ENCODE measurements at regions of chr1 and their contacts with region 1.

Region 1: DNA sequence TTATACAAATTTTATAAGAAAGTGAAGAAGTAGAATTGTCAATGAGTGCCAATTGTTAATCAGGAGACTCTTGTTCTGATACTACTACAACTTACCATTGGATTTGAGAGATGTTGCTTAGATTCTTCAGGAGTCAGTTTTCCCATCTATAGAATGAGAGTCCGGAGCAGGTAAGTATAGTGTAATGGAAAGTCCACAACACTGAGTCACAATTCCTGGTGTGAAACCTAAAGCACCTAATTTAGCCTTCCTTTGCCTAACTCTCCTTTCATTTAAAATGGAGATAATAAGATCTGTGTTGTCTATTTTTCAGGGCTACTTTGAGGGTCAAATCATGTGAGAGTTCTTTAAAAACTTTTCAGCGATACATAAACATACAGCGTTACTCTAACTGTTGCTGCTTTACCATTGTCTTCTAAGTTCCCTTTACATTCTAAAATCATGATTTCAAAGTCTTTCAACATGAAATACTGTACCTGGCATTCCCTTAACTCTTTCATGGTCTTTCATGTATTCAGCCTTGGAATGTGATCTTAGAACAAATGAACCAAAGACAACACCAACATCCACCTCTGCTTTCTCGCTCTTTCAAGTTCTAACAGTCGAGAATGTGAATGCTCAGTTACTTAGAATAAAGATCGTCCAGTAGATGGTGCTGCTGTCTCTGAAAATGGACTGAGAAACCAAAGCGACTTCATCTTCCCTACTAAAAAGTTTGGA is 90.9 kb downstream of the SLC30A10 start:
- DNase-seq: peak; percentile 55
- H3K4me3 Mint-ChIP-seq: peak overlapping the region; percentile 10
- H3K27ac Mint-ChIP-seq: no peak overlapping the region
- H3K4me1 Mint-ChIP-seq: peaks cover 20% of the 10 kb centered on the region
- H3K27me3 Mint-ChIP-seq: peaks cover 45% of the 10 kb centered on the region
- CTCF ChIP-seq: peak; percentile 57

Region 2: DNA sequence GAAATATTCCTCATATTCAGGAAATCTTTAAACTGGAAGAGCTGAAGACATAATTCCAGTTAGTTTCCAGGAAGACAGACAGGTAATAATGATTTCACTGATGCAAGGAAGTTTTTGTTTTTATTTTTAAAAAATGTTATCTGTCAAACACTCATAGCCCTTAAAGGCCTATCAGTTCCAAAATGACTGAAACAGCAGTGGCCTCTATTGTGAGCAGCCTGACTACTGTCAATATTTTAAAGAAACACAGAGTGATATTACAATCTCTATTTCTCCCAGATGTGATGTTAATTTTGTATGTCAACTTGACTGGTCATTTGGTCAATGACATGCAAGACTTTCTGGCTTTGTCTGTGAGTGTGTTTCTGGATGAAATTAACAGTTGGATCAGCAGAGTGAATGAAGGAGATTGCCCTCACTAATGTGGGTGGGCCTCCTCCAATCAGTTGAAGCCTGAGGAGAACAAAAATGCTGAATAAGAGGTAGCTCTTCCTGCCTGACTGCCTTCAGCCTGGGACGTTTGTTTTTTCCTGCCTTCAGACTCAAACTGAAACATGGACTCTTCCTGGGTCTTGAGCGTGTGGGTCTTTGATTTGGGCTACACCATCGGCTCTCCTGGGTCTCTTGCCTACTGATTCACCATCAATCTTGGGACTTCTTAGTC is 122.2 kb after region 1 on chr1:
- CTCF ChIA-PET with region 1: no interaction called
- intact Hi-C with region 1: loop called (anchors 5 kb)
- DNase-seq: no peak
- H3K4me3 Mint-ChIP-seq: no peak overlapping the region
- H3K27ac Mint-ChIP-seq: no peak overlapping the region
- H3K4me1 Mint-ChIP-seq: peaks cover 9% of the 10 kb centered on the region
- H3K27me3 Mint-ChIP-seq: no peaks in the 10 kb centered on the region
- CTCF ChIP-seq: no peak

Region 3: DNA sequence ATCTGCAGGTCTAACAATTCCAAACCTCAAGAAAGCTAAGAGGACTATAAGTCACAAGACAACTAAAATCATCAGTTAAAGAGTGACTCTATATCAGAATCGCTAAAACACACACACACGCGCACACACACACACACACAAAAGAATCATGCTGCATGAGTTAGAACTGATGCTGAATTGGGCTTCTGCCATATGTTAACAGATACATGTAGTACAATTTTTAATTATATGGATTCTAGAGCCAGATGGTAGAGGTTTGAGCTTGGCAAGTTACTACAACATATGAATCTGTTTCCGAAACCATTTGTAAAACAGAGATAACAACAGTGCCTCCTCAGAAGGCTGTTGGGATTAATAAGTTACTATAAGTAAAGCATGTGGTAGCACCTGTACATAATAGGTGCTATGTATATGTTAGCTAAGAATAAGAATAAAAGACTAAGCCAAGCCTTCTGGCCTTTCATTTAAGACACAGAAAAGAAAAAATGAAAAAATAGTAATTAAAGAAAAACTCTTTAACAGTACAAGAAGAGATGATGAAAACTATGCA is 191.0 kb after region 1 on chr1:
- CTCF ChIA-PET with region 1: no interaction called
- intact Hi-C with region 1: no loop called
- DNase-seq: no peak
- H3K4me3 Mint-ChIP-seq: no peak overlapping the region
- H3K27ac Mint-ChIP-seq: no peak overlapping the region
- H3K4me1 Mint-ChIP-seq: no peaks in the 10 kb centered on the region
- H3K27me3 Mint-ChIP-seq: no peaks in the 10 kb centered on the region
- CTCF ChIP-seq: no peak

Region 4: DNA sequence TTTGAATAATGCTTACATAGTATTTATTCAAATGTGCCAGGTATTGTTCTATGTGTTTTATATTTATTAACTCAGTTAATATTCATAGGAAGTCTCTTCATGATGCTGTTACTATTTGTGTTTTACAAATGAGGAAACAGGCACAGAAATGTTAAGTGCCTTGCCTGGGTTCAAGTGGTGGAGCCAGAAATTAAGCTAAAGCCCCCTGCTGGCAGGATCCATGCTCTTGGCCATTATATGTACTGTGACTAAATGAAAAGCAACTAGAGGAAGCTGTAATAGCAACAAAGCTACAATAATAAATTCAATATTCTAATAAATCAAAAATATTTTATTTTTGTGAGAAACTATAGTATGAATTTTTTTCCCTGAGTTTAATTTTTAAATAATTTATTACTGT is 286.5 kb after region 1 on chr1:
- CTCF ChIA-PET with region 1: no interaction called
- intact Hi-C with region 1: loop called (anchors 5 kb)
- DNase-seq: peak; percentile 35
- H3K4me3 Mint-ChIP-seq: no peak overlapping the region
- H3K27ac Mint-ChIP-seq: no peak overlapping the region
- H3K4me1 Mint-ChIP-seq: peaks cover 31% of the 10 kb centered on the region
- H3K27me3 Mint-ChIP-seq: no peaks in the 10 kb centered on the region
- CTCF ChIP-seq: peak; percentile 44

Region 5: GRCh38 chr1:220217383-220217988 is 380.1 kb after region 1 on chr1:
- CTCF ChIA-PET with region 1: no interaction called
- intact Hi-C with region 1: loop called (anchors 1 kb)
- DNase-seq: peak; percentile 44
- H3K4me3 Mint-ChIP-seq: no peak overlapping the region
- H3K27ac Mint-ChIP-seq: no peak overlapping the region
- H3K4me1 Mint-ChIP-seq: no peaks in the 10 kb centered on the region
- H3K27me3 Mint-ChIP-seq: no peaks in the 10 kb centered on the region
- CTCF ChIP-seq: no peak

Measured in Calu3 (cell line).